Gastrocnemius medialis (tissue), 4 donors: ENCODE measurements at regions of chr11 and their contacts with region 1.

Region 1: GRCh38 chr11:19071255-19071654 is 10.7 kb upstream of the MRGPRX2 start:
- DNase-seq: peak; percentile 16 to 39
- ATAC-seq: peak; percentile 92 to 95
- H3K4me3 ChIP-seq: peak overlapping the region in 3 of 4 donors; percentile 8 to 25 (median 9)
- H3K27ac ChIP-seq: no peak overlapping the region
- H3K4me1 ChIP-seq: no peaks in the 10 kb centered on the region
- H3K27me3 ChIP-seq: no peaks in the 10 kb centered on the region
- CTCF ChIP-seq: peak; percentile 70 to 92 (median 84)
- POLR2A ChIP-seq: no peak

Region 2: GRCh38 chr11:18927550-18928322 is 143.5 kb before region 1 on chr11:
- in situ Hi-C with region 1: no loop called
- intact Hi-C with region 1: no loop called
- DNase-seq: no peak
- ATAC-seq: no peak
- H3K4me3 ChIP-seq: no peak overlapping the region
- H3K27ac ChIP-seq: no peak overlapping the region
- H3K4me1 ChIP-seq: no peaks in the 10 kb centered on the region
- H3K27me3 ChIP-seq: no peaks in the 10 kb centered on the region
- CTCF ChIP-seq: no peak
- POLR2A ChIP-seq: no peak

Region 3: DNA sequence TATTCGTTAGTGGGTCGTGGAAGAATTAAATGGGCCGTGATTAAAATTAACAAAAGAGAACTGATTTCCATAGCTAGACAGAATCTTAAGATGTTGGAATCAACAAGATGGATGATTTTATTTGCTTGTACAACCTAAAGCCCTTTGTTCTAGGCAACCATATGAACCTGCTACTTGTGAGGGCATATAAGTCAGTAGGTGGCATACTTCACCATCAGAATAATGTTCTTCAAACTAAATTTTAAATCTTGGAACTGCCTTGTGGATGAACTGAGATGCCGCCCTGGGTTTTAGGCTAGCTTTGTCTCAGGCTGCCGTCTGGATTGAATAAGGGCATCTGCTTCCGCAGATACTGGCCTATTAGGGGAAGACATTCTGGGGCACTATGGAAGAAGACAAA is 89.6 kb after region 1 on chr11:
- in situ Hi-C with region 1: no loop called
- intact Hi-C with region 1: loop called (anchors 10 kb)
- DNase-seq: no peak
- ATAC-seq: peak in 1 of 2 donors; percentile 61
- H3K4me3 ChIP-seq: no peak overlapping the region
- H3K27ac ChIP-seq: no peak overlapping the region
- H3K4me1 ChIP-seq: no peaks in the 10 kb centered on the region
- H3K27me3 ChIP-seq: no peaks in the 10 kb centered on the region
- CTCF ChIP-seq: peak in 2 of 5 experiments; percentile 4 to 29
- POLR2A ChIP-seq: no peak

Region 4: DNA sequence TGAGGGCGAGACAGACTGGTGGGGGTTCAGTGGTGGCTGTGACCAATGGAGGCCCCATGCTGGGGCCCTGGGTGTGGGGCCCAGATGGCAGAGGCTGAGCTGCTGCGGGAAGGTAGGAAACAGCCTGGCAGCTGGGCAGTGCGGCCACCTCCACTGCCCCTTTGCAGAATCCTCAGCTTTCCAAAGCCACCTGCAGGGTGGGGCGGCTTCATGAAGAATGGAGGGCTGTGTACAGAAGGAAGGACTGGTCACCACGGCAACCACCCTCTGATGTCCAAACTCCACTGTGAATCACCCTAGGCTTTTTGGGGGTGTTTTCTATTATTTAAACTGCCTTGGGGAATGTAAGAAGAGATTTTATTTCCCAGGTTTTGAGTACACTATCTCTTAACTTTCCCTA is 475.1 kb after region 1 on chr11:
- in situ Hi-C with region 1: loop called in 2 of 4 experiments (anchors 10 kb)
- intact Hi-C with region 1: no loop called
- DNase-seq: no peak
- ATAC-seq: no peak
- H3K4me3 ChIP-seq: no peak overlapping the region
- H3K27ac ChIP-seq: no peak overlapping the region
- H3K4me1 ChIP-seq: no peaks in the 10 kb centered on the region
- H3K27me3 ChIP-seq: no peaks in the 10 kb centered on the region
- CTCF ChIP-seq: no peak
- POLR2A ChIP-seq: no peak